Calu3 (cell line): ENCODE measurements at regions of chr12 and their contacts with region 1.

Region 1: GRCh38 chr12:6735448-6736191 is 11.8 kb downstream of the COPS7A start:
- DNase-seq: peak; percentile 58
- H3K4me3 Mint-ChIP-seq: no peak overlapping the region
- H3K27ac Mint-ChIP-seq: no peak overlapping the region
- H3K4me1 Mint-ChIP-seq: peaks cover 8% of the 10 kb centered on the region
- H3K27me3 Mint-ChIP-seq: no peaks in the 10 kb centered on the region
- CTCF ChIP-seq: no peak

Region 2: DNA sequence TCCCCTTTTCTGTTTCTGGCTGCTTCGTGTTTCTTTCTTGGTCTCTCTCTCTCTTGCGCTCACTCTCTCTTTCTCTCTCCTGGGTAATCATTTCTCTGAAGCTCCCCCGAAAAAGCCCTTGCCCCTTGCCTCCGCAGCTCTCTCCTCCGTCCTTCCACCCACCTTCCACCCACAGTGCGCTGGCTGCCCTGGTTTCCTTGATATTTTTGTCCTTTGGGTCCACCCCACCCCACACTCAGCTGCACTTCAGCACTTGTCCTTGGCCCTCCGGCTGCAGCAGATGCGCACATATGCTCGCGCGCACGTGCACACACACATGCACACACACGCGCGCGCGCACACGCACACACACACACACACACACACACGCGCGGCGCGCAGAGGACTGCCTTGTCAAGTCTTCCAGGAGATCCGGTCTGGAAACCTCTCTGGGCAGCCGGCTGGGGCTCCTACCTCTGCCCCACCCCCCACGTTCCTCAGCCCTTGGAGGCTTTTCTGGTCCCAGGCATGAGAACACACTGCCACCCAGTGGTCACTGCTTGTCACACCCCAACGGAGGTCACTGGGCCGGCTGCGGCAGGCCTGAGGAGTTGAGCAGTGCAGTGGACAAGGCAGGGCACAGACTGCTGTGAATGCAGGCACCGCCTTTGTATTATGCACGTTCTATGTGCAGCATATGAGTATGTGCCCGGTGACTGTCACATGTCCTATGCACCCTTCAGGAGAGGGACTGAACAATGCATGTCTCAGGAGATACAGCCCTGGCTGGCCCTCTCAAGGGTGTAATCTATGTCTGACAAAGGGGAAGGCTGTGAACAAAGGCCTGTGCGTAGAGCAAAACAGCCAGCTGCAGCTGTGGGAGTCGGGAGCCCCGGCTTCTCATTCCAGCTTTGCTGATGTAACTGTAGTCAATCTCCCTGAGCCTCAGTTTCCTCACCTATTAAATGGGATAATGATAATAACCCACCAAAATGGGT is 43.2 kb after region 1 on chr12:
- CTCF ChIA-PET with region 1: no interaction called
- intact Hi-C with region 1: loop called (anchors 1 kb)
- DNase-seq: peak; percentile 96
- H3K4me3 Mint-ChIP-seq: peak overlapping the region; percentile 70
- H3K27ac Mint-ChIP-seq: no peak overlapping the region
- H3K4me1 Mint-ChIP-seq: peaks cover 35% of the 10 kb centered on the region
- H3K27me3 Mint-ChIP-seq: peaks cover 67% of the 10 kb centered on the region
- CTCF ChIP-seq: peak; percentile 91